Common myeloid progenitor, CD34-positive (primary cell): ENCODE measurements at regions of chr1 and their contacts with region 1.

Region 1: DNA sequence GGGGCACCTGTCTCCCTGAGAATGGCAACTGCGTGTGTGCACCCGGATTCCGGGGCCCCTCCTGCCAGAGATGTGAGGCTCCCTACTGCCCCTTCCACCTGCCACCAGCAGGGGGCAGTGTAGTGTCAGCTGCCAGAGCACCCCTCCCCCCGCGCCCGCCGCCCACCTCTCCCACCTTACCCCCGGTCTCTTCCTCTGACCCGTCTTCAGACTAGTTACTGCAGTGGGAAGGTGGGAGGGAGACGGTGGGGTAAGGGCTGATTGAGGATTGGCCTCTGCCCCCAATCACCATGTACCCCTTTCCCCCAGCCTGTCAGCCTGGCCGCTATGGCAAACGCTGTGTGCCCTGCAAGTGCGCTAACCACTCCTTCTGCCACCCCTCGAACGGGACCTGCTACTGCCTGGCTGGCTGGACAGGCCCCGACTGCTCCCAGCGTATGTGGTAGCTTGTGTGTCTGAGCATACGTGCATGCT is 10.1 kb upstream of the LRRC71 start:
- DNase-seq: peak in 2 of 3 donors; percentile 58 to 63
- H3K4me3 ChIP-seq: no peak overlapping the region
- H3K27ac ChIP-seq: no peak overlapping the region
- H3K4me1 ChIP-seq: peaks cover 0 to 61% (median 17%) of the 10 kb centered on the region in 4 experiments
- H3K27me3 ChIP-seq: no peaks in the 10 kb centered on the region

Region 2: GRCh38 chr1:156571949-156572662 is 338.2 kb before region 1 on chr1 and contains the start of gene IQGAP3:
- CTCF ChIA-PET with region 1: no interaction called
- POLR2A ChIA-PET with region 1: no interaction called
- DNase-seq: peak; percentile 77 to 91 (median 87)
- H3K4me3 ChIP-seq: peak within 1 kb of the TSS; percentile 37 to 88 (median 71)
- H3K27ac ChIP-seq: no peak within 1 kb of the TSS
- H3K4me1 ChIP-seq: peaks cover 11 to 23% (median 22%) of the 10 kb centered on the region in 4 experiments
- H3K27me3 ChIP-seq: no peaks in the 10 kb centered on the region

Region 3: DNA sequence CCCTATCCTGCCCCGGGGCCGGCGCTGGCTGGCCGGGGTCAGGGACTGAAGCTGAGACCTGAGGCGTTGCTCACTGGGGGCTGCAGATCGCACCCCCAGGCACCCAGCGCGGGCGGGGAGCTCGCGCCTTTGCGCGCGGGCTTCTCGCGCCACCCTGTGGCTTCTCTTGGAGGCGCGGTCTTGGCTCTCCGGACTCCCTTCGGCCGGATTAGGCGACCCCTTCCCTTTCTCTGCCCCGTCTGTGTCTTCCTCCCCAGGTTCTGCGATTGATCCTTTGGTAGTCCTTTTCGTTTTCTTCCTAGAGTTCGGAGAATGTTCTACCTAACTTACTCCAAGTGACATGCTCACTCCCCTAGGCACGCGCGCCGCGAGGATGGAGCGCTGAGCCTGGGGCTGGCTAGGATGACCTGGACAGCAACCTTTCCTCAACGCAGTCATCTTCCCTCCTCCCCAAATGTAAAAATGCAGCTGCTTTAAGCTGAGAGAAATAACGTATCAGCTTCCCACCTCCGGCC is 50.2 kb before region 1 on chr1:
- CTCF ChIA-PET with region 1: interaction called, 12 read pairs
- POLR2A ChIA-PET with region 1: no interaction called
- DNase-seq: peak; percentile 31 to 61 (median 57)
- H3K4me3 ChIP-seq: peak overlapping the region; percentile 22 to 69 (median 54)
- H3K27ac ChIP-seq: no peak overlapping the region
- H3K4me1 ChIP-seq: peaks cover 2 to 43% (median 39%) of the 10 kb centered on the region in 4 experiments
- H3K27me3 ChIP-seq: peaks cover 0 to 78% (median 47%) of the 10 kb centered on the region in 5 experiments

Region 4: GRCh38 chr1:156920233-156921052 is 10.1 kb after region 1 on chr1 and contains the start of gene LRRC71:
- CTCF ChIA-PET with region 1: interaction called, 48 read pairs
- POLR2A ChIA-PET with region 1: no interaction called
- DNase-seq: peak; percentile 82 to 87 (median 84)
- H3K4me3 ChIP-seq: peak within 1 kb of the TSS in 4 of 7 experiments; percentile 8 to 50 (median 37)
- H3K27ac ChIP-seq: no peak within 1 kb of the TSS
- H3K4me1 ChIP-seq: peaks cover 0 to 27% (median 17%) of the 10 kb centered on the region in 4 experiments
- H3K27me3 ChIP-seq: peaks cover 12 to 56% (median 39%) of the 10 kb centered on the region in 5 experiments

Region 5: GRCh38 chr1:158212320-158212719 is 1302.0 kb after region 1 on chr1:
- CTCF ChIA-PET with region 1: no interaction called
- POLR2A ChIA-PET with region 1: no interaction called
- DNase-seq: no peak
- H3K4me3 ChIP-seq: no peak overlapping the region
- H3K27ac ChIP-seq: no peak overlapping the region
- H3K4me1 ChIP-seq: no peaks in the 10 kb centered on the region
- H3K27me3 ChIP-seq: peaks cover 0 to 8% (median 0%) of the 10 kb centered on the region in 5 experiments